GM23248 (cell line): ENCODE measurements at regions of chr12 and their contacts with region 1.

Region 1: GRCh38 chr12:88985475-88986030 is 366.7 kb downstream of the DUSP6 start:
- DNase-seq: no peak
- H3K4me3 ChIP-seq: no peak overlapping the region
- H3K27ac ChIP-seq: no peak overlapping the region
- H3K4me1 ChIP-seq: no peaks in the 10 kb centered on the region
- H3K27me3 ChIP-seq: no peaks in the 10 kb centered on the region

Region 2: DNA sequence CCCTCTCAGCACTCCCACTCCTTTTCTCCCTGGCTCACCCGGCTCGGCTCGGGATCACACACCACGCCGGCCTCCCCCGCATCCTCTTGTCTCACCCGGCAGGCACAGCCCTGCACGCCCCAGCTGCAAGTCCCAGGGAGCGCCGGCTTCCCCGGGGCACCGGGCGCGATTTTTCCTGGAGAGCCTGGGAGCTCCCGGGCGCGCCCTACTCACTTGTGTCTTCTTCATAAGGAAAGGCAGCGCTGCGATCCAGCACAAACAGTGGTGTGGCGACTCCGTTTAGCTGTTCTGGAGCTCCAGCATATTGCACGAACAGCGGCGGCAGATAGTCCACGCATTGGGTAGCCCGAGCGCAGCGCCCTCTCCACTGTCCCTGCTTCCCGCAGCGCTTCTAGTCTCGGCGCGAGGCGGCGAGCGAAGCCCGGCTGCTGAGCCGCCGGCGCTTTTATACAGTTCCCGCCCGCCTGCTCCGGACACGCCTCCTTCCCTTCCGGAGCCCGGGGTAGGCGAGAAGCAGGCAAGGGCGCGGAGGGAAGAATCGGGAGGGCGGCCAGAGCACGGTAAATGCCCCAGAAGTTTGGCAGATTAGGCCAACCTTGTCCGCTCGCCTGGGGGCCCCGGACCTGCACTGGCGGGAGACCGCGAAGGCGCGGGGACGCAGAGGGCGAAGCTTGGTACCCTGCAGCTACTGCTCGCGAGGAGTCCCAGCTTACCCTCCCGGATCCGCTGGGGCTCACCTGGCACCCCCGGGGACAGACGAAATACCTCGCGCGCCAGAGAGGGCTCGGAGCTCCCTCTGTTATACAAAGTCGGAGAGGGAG is 405.3 kb before region 1 on chr12 and contains the start of gene KITLG:
- in situ Hi-C with region 1: loop called (anchors 5 kb)
- DNase-seq: peak; percentile 95
- H3K4me3 ChIP-seq: peak within 1 kb of the TSS; percentile 95
- H3K27ac ChIP-seq: peak within 1 kb of the TSS; percentile 60
- H3K4me1 ChIP-seq: peaks cover 22% of the 10 kb centered on the region
- H3K27me3 ChIP-seq: no peaks in the 10 kb centered on the region
- total RNA-seq, gene KITLG: 98.4 and 146 TPM in 2 replicates

Region 3: DNA sequence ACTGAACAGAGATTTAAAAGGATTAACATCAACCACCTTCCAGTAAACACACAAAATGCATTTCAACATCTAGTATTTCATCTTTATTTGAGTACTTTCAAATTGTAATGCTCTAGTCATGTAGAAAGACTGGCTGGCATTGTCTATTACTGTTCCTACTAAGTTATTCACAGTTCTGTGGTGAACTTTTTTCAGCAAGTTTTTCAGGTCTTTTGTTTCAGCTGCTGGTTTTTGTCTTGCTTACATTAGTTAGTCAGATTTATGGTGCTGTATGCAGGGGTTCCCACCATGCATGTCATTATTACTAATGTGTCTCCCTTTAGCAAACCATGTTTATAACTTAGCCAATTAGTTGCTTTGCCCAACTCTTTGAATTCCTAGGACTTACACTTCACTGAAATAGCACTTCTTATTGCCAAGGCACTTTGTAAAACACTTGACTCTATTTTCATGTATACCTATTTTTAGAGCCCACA is 151.9 kb before region 1 on chr12:
- in situ Hi-C with region 1: no loop called
- DNase-seq: peak; percentile 39
- H3K4me3 ChIP-seq: no peak overlapping the region
- H3K27ac ChIP-seq: peak overlapping the region; percentile 28; the same call in 1 of the 2 replicates
- H3K4me1 ChIP-seq: 0 out of 2 replicates have a peak, but pooled peaks cover 13% of the 10 kb centered on the region
- H3K27me3 ChIP-seq: no peaks in the 10 kb centered on the region